ENCODE measurements at regions of chr14 and their contacts with region 1.

Region 1: DNA sequence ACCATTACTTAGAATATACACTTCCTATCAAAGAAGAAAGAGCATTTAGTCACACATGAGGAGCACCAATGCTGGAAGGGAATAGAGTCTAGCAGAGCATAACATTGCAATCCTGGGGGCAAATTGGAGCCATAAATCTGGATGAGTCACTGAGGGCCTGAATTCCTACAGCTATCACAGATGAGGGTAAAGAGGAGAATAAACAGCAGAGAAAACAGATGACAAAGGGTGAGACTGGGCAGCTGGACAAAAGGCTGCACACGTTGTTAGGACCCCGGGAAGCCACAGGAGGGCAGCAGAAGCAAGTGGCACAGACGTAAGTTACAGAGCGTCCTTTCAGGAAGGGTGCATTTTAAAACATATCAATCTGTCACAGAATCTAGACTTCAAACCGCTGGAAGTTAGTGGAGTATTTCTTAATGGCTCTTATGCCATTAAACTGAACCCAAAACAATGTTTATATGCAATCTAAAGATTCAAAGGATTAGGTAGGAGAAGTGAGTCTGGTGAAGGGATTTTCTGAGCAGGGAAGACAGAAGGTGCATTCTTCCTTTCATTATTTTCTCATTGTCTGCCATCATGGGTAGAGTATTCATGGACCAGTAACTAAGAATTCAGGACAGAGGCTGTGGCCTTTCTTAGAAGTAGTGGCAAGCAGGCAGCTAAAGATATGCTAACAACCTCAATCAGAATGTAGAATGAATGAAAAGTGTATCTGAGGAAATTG is 159.8 kb upstream of the DAAM1 start:
- DNase-seq: peak; percentile 93
- H3K4me3 ChIP-seq: no peak overlapping the region
- H3K27ac ChIP-seq: peak overlapping the region; percentile 53
- H3K27me3 ChIP-seq: no peaks in the 10 kb centered on the region
- CTCF ChIP-seq: peak; percentile 95

Region 2: GRCh38 chr14:59126710-59127432 is 98.2 kb after region 1 on chr14:
- CTCF ChIA-PET with region 1: interaction called, 36 read pairs
- POLR2A ChIA-PET with region 1: no interaction called
- DNase-seq: no peak
- H3K4me3 ChIP-seq: no peak overlapping the region
- H3K27ac ChIP-seq: no peak overlapping the region
- H3K27me3 ChIP-seq: no peaks in the 10 kb centered on the region
- CTCF ChIP-seq: peak; percentile 75